Activated T-helper 2 cell treated with anti-CD3 and anti-CD28 coated beads, Interferon-gamma antibody, Interleukin-2, Interleukin-4, amounts not matched to agents 10 μg/mL and 5 μg/mL and 100 μg/mL, durations not matched to agents 14 hours and 24 hours and 36 hours (primary cell): ENCODE measurements at regions of chr13 and their contacts with region 1.

Region 1: DNA sequence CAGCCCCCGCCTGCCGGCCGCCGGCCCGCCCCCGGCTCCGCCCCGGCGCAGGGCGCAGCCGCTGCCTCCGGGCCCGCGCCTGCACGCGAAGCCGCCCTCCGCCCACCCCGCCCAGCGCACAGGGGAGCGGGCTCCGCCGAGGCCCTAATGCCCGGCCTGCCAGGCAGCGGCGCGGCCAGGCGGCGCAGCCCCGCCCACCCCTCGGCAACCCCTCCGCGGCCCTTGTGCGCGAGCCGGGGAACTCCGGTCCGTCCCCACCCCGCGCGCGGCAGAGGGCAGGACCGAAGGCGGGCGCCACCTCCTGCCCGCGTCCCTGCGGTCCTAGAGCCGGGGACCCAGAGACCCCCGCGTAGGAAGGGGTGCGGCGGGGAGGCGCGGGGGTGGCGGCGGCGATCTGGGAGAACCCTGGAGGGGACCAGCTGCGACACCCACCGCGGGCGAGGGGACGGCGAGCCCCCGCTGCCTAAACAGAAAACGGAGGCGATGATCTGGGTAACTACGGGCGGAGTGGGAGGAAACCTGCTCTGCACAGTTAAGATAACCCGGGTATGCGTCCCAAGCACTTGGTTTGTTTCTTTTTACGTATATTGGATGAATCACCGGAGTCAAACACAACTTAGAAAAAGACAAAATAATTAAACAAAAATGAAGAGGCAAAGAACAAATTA is 350 bp upstream of the USP12 start:
- DNase-seq: peak; percentile 86
- H3K4me3 Mint-ChIP-seq: peak overlapping the region; percentile 80
- H3K27ac Mint-ChIP-seq: peak overlapping the region; percentile 88
- H3K4me1 Mint-ChIP-seq: peaks cover 53% of the 10 kb centered on the region
- H3K27me3 Mint-ChIP-seq: no peaks in the 10 kb centered on the region

Region 2: DNA sequence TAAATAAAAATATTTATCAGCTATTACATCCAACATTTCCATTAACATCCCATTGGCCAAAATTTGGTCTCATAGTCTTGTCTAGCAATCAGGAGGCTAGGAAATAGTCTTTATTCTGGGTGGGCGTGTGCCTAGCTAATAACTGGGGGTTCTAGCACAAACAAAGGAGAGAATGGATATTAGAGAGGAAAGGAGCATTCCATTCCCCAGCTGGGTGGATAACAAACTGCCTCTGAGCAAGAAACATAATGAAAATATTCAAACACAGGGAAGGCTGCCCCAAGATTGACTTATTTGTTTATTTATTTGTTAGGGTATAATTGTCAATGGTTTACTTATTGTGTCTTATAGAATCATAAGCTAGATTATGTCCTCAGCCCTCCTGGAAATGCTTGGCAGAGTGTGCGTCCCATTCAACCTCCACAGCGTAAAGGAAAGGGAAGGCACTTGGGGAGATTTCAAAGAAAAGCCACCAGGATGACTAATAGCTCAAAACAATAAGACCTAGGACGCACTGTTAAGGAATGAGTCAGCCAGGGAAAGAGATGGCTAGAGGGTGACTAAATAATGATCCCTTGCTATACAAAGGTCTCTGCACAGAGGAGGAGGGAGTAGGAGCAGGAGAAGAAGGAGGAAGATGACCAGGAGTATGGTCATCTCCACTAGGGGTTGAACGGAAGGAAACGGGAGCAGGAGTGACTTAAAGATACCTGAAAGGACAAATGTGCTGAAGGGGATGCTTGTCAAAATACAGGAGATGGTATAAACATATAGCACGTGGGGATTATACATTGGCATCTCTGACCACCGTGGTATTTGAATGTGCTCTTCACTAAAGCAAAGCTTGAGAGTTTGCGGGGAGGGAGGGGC is 23.2 kb after region 1 on chr13:
- intact Hi-C with region 1: loop called (anchors 1 kb)
- DNase-seq: no peak
- H3K4me3 Mint-ChIP-seq: no peak overlapping the region
- H3K27ac Mint-ChIP-seq: peak overlapping the region; percentile 41
- H3K4me1 Mint-ChIP-seq: peaks cover 26% of the 10 kb centered on the region
- H3K27me3 Mint-ChIP-seq: no peaks in the 10 kb centered on the region

Region 3: GRCh38 chr13:27251166-27252091 is 79.5 kb after region 1 on chr13 and contains the start of gene RPL21:
- intact Hi-C with region 1: loop called (anchors 1 kb)
- DNase-seq: peak; percentile 86
- H3K4me3 Mint-ChIP-seq: peak within 1 kb of the TSS; percentile 98
- H3K27ac Mint-ChIP-seq: peak within 1 kb of the TSS; percentile 99
- H3K4me1 Mint-ChIP-seq: peaks cover 35% of the 10 kb centered on the region
- H3K27me3 Mint-ChIP-seq: no peaks in the 10 kb centered on the region
- total RNA-seq, gene RPL21: 1,112 and 1,127 TPM in 2 replicates

Region 4: GRCh38 chr13:27353166-27353583 is 181.2 kb after region 1 on chr13:
- intact Hi-C with region 1: loop called (anchors 5 kb)
- DNase-seq: peak; percentile 31
- H3K4me3 Mint-ChIP-seq: no peak overlapping the region
- H3K27ac Mint-ChIP-seq: peak overlapping the region; percentile 3
- H3K4me1 Mint-ChIP-seq: peaks cover 10% of the 10 kb centered on the region
- H3K27me3 Mint-ChIP-seq: peaks cover 6% of the 10 kb centered on the region